Body of pancreas (tissue), 4 donors: ENCODE measurements at regions of chr19 and their contacts with region 1.

Region 1: GRCh38 chr19:47609906-47610894 is 1.3 kb downstream of the BICRA start:
- DNase-seq: peak; percentile 38 to 50 (median 40)
- ATAC-seq: no peak
- H3K4me3 ChIP-seq: peak overlapping the region; percentile 57 to 90
- H3K27ac ChIP-seq: peak overlapping the region; percentile 40 to 94 (median 80)
- H3K4me1 ChIP-seq: peaks cover 34% of the 10 kb centered on the region
- H3K27me3 ChIP-seq: no peaks in the 10 kb centered on the region
- CTCF ChIP-seq: peak in 1 of 7 experiments; percentile 8
- POLR2A ChIP-seq: peak in 1 of 3 donors; percentile 49

Region 2: DNA sequence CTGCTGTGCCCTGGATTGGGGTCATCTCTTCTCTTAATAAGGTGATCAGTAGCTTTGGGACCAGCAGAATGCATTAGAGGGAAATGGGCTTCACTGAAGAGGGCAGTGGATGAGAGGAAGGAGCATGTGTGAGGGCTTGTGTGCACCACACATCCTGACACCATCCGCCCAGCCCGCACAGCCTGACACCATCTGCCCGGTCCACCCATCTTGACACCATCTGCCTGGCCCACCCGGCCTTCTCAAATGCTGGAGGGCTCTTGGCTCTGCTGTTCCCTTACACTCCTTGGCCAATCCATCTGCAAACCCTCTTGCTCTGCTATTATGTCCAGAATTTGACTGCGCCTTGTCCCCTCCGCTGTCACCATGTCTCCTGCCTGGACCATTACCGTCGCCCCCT is 40.5 kb after region 1 on chr19:
- intact Hi-C with region 1: loop called (anchors 5 kb)
- DNase-seq: no peak
- ATAC-seq: no peak
- H3K4me3 ChIP-seq: no peak overlapping the region
- H3K27ac ChIP-seq: no peak overlapping the region
- H3K4me1 ChIP-seq: peaks cover 16% of the 10 kb centered on the region
- H3K27me3 ChIP-seq: no peaks in the 10 kb centered on the region
- CTCF ChIP-seq: no peak
- POLR2A ChIP-seq: no peak

Region 3: DNA sequence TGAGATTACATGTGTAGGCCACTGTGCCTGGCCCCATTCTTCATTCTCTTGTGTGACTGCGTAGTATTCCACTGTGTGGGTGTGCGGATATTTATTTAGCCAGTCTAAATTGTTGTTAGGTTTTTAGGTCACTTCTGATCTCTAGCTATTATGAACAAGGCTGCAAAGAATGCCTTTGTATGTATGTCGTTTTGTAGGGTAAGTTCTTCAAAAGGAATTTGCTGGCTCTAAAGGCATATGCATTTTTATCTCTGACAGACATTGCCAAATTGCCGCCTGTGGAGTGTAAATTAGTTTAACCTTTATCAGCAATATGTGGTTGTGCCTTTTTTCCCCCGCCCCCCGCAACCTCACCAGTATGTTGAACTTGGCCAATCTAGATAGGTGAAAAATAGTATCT is 72.7 kb after region 1 on chr19:
- intact Hi-C with region 1: no loop called
- DNase-seq: no peak
- ATAC-seq: no peak
- H3K4me3 ChIP-seq: no peak overlapping the region
- H3K27ac ChIP-seq: no peak overlapping the region
- H3K4me1 ChIP-seq: no peaks in the 10 kb centered on the region
- H3K27me3 ChIP-seq: no peaks in the 10 kb centered on the region
- CTCF ChIP-seq: no peak
- POLR2A ChIP-seq: no peak